ENCODE measurements at regions of chr3 and their contacts with region 1.

Region 1: GRCh38 chr3:100260685-100261484 is at the start of gene TBC1D23:
- DNase-seq: peak; percentile 96 to 99 (median 99)
- H3K4me3 ChIP-seq: peak within 1 kb of the TSS; percentile 71 to 100 (median 97)
- H3K27ac ChIP-seq: peak within 1 kb of the TSS; percentile 61 to 99 (median 93)
- H3K27me3 ChIP-seq: no peaks in the 10 kb centered on the region
- CTCF ChIP-seq: peak in 30 of 56 donors; percentile 4 to 52 (median 29)
- total RNA-seq, gene TBC1D23: 30.8 to 54.2 (median 41.1) TPM

Region 2: GRCh38 chr3:99817437-99818240 is 443.2 kb before region 1 on chr3 and contains the start of gene CMSS1:
- intact Hi-C with region 1: loop called in 1 of 2 experiments (anchors 5 kb)
- DNase-seq: peak; percentile 89 to 97 (median 94)
- H3K4me3 ChIP-seq: peak within 1 kb of the TSS; percentile 54 to 98 (median 87)
- H3K27ac ChIP-seq: peak within 1 kb of the TSS in 58 of 59 donors; percentile 14 to 95 (median 87)
- H3K27me3 ChIP-seq: no peaks in the 10 kb centered on the region
- CTCF ChIP-seq: peak in 29 of 56 donors; percentile 6 to 54 (median 28)
- total RNA-seq, gene CMSS1: 13.7 to 69.0 (median 39.0) TPM

Region 3: GRCh38 chr3:100068826-100069225 is 192.1 kb before region 1 on chr3:
- intact Hi-C with region 1: loop called in 1 of 2 experiments (anchors 5 kb)
- DNase-seq: peak in 9 of 10 donors; percentile 24 to 66 (median 58)
- H3K4me3 ChIP-seq: no peak overlapping the region
- H3K27ac ChIP-seq: no peak overlapping the region
- H3K27me3 ChIP-seq: no peaks in the 10 kb centered on the region
- CTCF ChIP-seq: peak; percentile 25 to 76 (median 65)

Region 4: GRCh38 chr3:100210772-100211135 is 50.1 kb before region 1 on chr3:
- intact Hi-C with region 1: no loop called
- DNase-seq: no peak
- H3K4me3 ChIP-seq: peak overlapping the region in 1 of 59 donors; percentile 3
- H3K27ac ChIP-seq: peak overlapping the region in 12 of 59 donors; percentile 11 to 58 (median 28)
- H3K27me3 ChIP-seq: no peaks in the 10 kb centered on the region
- CTCF ChIP-seq: no peak

Region 5: DNA sequence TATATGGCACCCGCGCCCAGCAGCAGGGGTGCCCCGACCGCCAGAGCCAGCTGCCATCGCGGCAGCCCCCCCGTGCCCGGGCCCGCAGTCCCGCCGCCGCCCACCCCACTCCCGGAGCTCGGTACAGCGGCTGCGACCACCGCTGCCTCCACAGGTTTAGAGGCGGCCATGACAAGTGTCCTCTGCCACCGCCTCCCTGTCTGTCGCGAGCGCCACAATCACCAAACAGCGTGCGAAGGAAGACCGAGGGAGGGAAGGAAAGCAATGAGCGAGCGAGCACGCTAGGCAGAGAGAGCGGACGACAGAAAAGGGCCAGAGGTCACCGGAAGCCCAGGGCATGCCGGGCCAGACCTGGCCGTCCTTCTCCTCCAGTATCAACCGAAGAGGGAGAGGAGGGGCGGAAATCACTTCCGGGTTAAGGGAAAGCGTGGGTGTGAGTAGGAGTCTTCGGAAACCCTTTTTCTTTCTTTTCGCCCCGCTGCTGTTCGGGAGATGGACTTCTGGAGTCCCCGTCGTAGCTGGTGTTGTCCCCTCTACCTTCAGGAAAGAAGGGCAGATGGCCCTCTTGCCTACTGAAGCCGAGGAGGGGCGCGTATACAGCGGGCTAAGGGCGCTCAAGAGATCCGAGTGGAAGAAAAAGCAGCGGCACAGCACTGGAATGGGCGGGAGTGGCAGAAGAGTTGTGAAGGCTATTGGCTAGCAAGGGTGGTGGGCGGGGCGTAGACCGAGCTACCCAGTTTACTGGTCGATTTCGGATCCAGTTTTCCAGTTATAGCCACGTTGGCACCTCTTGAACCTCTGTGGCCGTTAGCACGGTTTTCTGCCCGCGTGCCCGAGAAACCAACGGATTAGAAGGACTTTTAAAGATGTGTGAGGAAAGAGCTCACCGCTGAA is 140.1 kb after region 1 on chr3 and contains the starts of genes LNP1 and TOMM70:
- intact Hi-C with region 1: loop called (anchors 2 kb)
- DNase-seq: peak; percentile 94 to 99 (median 98)
- H3K4me3 ChIP-seq: peak within 1 kb of the TSS; percentile 78 to 100 (median 94)
- H3K27ac ChIP-seq: peak within 1 kb of the TSS; percentile 7 to 95 (median 87)
- H3K27me3 ChIP-seq: no peaks in the 10 kb centered on the region
- CTCF ChIP-seq: peak in 14 of 56 donors; percentile 0 to 49 (median 20)
- total RNA-seq, gene LNP1: 4.3 to 16.9 (median 9.5) TPM
- total RNA-seq, gene TOMM70: 24.6 to 81.5 (median 58.4) TPM